CD4-positive, alpha-beta T cell (primary cell): ENCODE measurements at regions of chr11 and their contacts with region 1.

Region 1: GRCh38 chr11:30346068-30346688 is 23.3 kb downstream of the ARL14EP start:
- DNase-seq: peak in 3 of 14 experiments; percentile 66 to 73 (median 73)
- ATAC-seq: peak; percentile 61
- H3K4me3 ChIP-seq: no peak overlapping the region
- H3K4me3 Mint-ChIP-seq: no peak overlapping the region
- H3K27ac ChIP-seq: no peak overlapping the region
- H3K27ac Mint-ChIP-seq: no peak overlapping the region
- H3K4me1 ChIP-seq: no peaks in the 10 kb centered on the region
- H3K4me1 Mint-ChIP-seq: peaks cover 19% of the 10 kb centered on the region
- H3K27me3 ChIP-seq: no peaks in the 10 kb centered on the region
- H3K27me3 Mint-ChIP-seq: peaks cover 4% of the 10 kb centered on the region
- CTCF ChIP-seq: peak; percentile 66

Region 2: GRCh38 chr11:30277176-30277575 is 69.0 kb before region 1 on chr11:
- CTCF ChIA-PET with region 1: no interaction called
- POLR2A ChIA-PET with region 1: no interaction called
- intact Hi-C with region 1: loop called in 1 of 2 experiments (anchors 5 kb)
- DNase-seq: no peak
- ATAC-seq: no peak
- H3K4me3 ChIP-seq: no peak overlapping the region
- H3K4me3 Mint-ChIP-seq: no peak overlapping the region
- H3K27ac ChIP-seq: no peak overlapping the region
- H3K27ac Mint-ChIP-seq: no peak overlapping the region
- H3K4me1 ChIP-seq: peaks cover 11% of the 10 kb centered on the region
- H3K4me1 Mint-ChIP-seq: peaks cover 14% of the 10 kb centered on the region
- H3K27me3 ChIP-seq: no peaks in the 10 kb centered on the region
- H3K27me3 Mint-ChIP-seq: peaks cover 25% of the 10 kb centered on the region
- CTCF ChIP-seq: no peak

Region 3: DNA sequence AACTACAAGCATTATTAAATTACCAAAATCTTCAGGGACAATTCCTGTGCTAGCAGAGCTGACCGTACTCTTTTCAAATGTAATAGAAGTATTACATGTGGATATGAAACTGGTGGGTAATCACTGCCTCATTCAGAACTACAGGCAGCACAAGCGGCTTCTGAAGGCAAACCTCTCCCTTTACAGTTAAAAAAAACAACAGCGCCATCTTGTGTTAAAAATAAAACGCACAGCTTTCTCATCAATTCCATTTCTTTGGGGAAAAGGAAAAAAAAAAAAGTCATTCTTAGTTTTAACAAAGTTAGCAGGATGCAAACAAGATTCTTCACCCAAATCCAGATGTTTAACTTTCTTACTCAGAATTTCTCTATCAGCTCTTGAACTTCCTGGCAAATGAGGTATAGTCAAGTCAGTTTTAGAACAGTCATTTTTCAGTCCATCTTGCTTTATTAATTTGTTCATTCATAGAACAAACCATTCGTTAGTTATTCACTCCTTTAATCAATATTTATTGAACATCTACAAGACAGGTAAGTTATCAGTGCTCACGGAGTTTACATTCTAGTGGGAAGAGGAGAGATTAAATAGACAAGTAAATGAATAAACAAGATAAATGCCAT is 571.8 kb after region 1 on chr11:
- CTCF ChIA-PET with region 1: no interaction called
- POLR2A ChIA-PET with region 1: no interaction called
- intact Hi-C with region 1: loop called (anchors 5 to 10 kb)
- DNase-seq: peak in 3 of 14 experiments; percentile 10 to 38 (median 35)
- ATAC-seq: no peak
- H3K4me3 ChIP-seq: no peak overlapping the region
- H3K4me3 Mint-ChIP-seq: no peak overlapping the region
- H3K27ac ChIP-seq: no peak overlapping the region
- H3K27ac Mint-ChIP-seq: no peak overlapping the region
- H3K4me1 ChIP-seq: no peaks in the 10 kb centered on the region
- H3K4me1 Mint-ChIP-seq: no peaks in the 10 kb centered on the region
- H3K27me3 ChIP-seq: no peaks in the 10 kb centered on the region
- H3K27me3 Mint-ChIP-seq: peaks cover 10% of the 10 kb centered on the region
- CTCF ChIP-seq: peak; percentile 40